H1 (cell line): ENCODE measurements at regions of chr1 and their contacts with region 1.

Region 1: DNA sequence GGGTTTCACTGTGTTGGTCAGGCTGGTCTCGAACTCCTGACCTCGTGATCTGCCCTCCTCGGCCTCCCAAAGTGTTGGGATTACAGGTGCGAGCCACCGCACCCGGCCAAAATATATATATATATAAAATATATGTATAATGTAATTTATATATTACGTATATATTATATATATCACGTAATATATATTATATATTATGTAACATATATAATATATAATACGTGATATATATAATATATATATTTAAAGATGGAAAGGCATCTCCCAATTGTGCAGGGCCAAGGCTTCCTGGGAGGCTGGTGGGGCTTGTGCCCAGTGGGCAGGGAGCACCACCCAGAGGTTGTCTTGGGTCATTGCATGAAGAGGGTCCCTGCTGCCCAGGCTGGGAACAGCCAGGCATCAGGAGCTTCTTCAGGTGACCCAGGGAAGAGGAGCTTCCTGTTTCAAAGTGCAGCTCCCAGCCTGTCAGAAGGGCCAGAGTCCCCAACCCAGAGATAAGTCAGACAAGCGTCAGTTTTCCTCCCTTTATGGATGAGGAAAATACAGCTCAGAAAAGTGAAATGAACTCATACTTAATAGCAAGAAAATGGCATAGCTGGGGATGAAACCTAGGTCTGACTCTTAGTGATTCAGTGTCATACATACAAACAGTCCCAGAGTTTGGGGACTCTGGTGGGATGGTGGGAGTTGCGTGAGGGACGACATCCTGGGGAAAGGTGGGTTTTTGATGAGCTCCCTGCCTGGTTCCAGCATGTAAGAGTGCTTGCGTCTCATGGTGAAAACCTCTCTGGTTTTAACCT is 12.0 kb downstream of the UBE2Q1 start:
- DNase-seq: peak; percentile 66 to 73
- H3K4me3 ChIP-seq: no peak overlapping the region
- H3K27ac ChIP-seq: no peak overlapping the region
- H3K4me1 ChIP-seq: no peaks in the 10 kb centered on the region; a peak in 1 of 7 replicates
- H3K27me3 ChIP-seq: no peaks in the 10 kb centered on the region
- CTCF ChIP-seq: peak; percentile 85 to 96 (median 90)
- EP300 ChIP-seq: no peak
- POLR2A ChIP-seq: no peak
- RAD21 ChIP-seq: peak; percentile 95 to 97

Region 2: DNA sequence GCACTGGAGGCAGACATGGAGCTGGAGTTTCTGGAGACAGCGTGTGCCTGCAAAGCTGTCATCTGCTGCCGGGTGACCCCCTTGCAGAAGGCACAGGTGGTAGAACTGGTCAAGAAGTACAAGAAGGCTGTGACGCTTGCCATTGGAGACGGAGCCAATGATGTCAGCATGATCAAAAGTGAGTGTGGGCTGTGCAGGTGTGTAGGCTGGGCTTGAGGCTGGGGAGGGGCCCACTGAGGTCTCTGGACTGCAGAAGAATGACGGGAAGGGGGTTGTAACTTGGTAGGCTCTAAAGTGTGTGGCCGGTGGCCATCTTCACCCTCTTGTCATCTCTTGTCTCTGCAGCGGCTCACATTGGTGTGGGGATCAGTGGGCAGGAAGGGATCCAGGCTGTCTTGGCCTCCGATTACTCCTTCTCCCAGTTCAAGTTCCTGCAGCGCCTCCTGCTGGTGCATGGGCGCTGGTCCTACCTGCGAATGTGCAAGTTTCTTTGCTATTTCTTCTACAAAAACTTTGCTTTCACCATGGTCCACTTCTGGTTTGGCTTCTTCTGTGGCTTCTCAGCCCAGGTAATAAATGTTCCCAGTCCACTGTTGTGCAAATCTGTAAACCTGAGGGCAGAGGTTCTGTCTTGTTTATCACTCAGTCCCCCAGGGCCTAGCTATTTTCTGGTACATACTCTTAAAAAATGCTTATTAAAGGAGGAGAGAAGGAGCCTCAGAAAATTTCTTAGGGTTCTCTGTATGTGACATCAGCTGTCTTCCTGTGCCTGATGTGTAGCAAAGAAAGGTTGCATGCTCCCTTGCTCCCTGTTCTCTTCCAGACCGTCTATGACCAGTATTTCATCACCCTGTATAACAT is 201.3 kb before region 1 on chr1:
- CTCF ChIA-PET with region 1: interaction called, 10 read pairs
- POLR2A ChIA-PET with region 1: no interaction called
- DNase-seq: peak in 1 of 2 experiments; percentile 86
- H3K4me3 ChIP-seq: no peak overlapping the region
- H3K27ac ChIP-seq: no peak overlapping the region
- H3K4me1 ChIP-seq: peaks cover 0 to 2% (median 0%) of the 10 kb centered on the region in 4 experiments; a peak in 2 of 7 replicates
- H3K27me3 ChIP-seq: no peaks in the 10 kb centered on the region
- CTCF ChIP-seq: peak in 2 of 3 experiments; percentile 80 to 95; a peak in 3 of 4 replicates
- EP300 ChIP-seq: no peak
- POLR2A ChIP-seq: no peak
- RAD21 ChIP-seq: peak; percentile 65 to 80

Region 3: DNA sequence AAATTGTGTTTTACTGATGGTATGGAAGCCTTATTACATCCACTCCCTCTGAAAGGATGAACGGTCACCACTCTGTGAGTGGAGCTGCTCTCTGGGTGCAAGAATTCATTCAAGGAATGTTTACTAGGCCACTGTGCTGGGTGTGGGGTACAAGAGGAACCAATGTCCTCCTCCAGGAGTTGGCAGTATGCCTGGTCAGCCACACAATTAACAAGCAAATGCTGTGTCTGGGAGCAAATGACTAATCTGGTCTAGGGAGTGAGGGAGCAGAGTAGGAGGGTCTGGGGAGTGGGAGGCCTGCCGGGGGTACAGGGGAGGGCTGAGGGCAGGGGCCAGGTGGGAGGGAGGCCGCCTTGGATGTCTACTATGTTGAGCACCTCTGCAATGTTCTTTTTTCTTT is 71.7 kb before region 1 on chr1:
- CTCF ChIA-PET with region 1: interaction called, 117 read pairs
- POLR2A ChIA-PET with region 1: no interaction called
- DNase-seq: no peak
- H3K4me3 ChIP-seq: no peak overlapping the region
- H3K27ac ChIP-seq: no peak overlapping the region
- H3K4me1 ChIP-seq: no peaks in the 10 kb centered on the region
- H3K27me3 ChIP-seq: no peaks in the 10 kb centered on the region
- CTCF ChIP-seq: no peak
- EP300 ChIP-seq: no peak
- POLR2A ChIP-seq: no peak
- RAD21 ChIP-seq: no peak

Region 4: GRCh38 chr1:154485106-154485505 is 61.4 kb before region 1 on chr1:
- CTCF ChIA-PET with region 1: interaction called, 117 read pairs
- POLR2A ChIA-PET with region 1: no interaction called
- DNase-seq: no peak
- H3K4me3 ChIP-seq: no peak overlapping the region
- H3K27ac ChIP-seq: no peak overlapping the region
- H3K4me1 ChIP-seq: no peaks in the 10 kb centered on the region
- H3K27me3 ChIP-seq: no peaks in the 10 kb centered on the region
- CTCF ChIP-seq: no peak
- EP300 ChIP-seq: no peak
- POLR2A ChIP-seq: no peak
- RAD21 ChIP-seq: no peak

Region 5: DNA sequence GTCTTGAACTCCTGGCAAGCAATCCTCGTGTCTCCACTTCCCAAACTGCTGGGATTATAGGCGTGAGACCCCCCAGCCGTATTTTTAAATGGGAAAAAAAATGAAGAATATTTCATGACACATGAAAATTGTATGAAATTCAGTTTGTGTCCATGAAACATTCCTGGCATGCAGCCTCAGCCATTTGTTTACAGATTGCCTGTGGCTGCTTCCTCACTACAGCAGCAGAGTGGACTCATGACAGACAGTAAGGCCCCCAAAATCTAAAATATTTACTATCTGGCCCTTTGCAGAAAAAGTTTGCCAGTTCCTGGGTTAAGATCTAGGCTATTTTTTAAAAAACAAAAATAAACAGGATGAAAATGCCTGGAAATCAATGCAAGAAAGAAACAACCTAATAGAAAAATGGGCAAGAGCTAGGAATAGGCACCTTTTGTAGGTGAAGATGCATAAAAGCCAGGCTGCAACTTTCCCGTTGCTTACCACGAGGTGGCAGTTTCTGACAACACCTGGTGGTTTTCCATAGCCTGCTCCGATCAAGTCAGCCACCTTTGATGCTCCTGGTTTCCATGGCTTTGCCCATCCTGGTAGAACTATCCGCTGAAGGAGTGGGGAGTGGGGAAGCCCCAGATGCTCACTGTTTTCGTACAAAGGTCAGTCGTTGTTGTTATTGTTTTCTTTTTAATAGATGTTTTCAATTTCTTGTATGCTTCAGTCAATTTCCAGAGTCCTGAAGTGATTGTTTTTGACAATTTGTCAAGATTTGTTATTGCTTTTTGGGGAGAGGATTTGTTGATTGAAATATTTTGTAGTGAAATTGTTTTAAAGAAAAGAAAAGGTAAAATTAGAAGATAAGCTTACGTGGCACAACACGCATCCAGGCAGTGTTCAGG is 12.3 kb before region 1 on chr1:
- CTCF ChIA-PET with region 1: interaction called, 63 read pairs
- POLR2A ChIA-PET with region 1: interaction called, 3 read pairs
- DNase-seq: peak in 1 of 2 experiments; percentile 62
- H3K4me3 ChIP-seq: no peak overlapping the region
- H3K27ac ChIP-seq: no peak overlapping the region
- H3K4me1 ChIP-seq: no peaks in the 10 kb centered on the region
- H3K27me3 ChIP-seq: no peaks in the 10 kb centered on the region
- CTCF ChIP-seq: peak; percentile 52 to 87 (median 80)
- EP300 ChIP-seq: peak in 1 of 2 experiments; percentile 39; a peak in 1 of 3 replicates
- POLR2A ChIP-seq: no peak
- RAD21 ChIP-seq: peak; percentile 83 to 84